Lower leg skin (tissue), 4 donors: ENCODE measurements at regions of chr12 and their contacts with region 1.

Region 1: GRCh38 chr12:64890873-64891468 is 66.5 kb downstream of the TBC1D30 start:
- DNase-seq: no peak
- H3K4me3 ChIP-seq: no peak overlapping the region
- CTCF ChIP-seq: no peak
- POLR2A ChIP-seq: no peak

Region 2: GRCh38 chr12:64923536-64923935 is 32.6 kb after region 1 on chr12:
- intact Hi-C with region 1: no loop called
- DNase-seq: no peak
- H3K4me3 ChIP-seq: no peak overlapping the region
- CTCF ChIP-seq: no peak
- POLR2A ChIP-seq: no peak

Region 3: DNA sequence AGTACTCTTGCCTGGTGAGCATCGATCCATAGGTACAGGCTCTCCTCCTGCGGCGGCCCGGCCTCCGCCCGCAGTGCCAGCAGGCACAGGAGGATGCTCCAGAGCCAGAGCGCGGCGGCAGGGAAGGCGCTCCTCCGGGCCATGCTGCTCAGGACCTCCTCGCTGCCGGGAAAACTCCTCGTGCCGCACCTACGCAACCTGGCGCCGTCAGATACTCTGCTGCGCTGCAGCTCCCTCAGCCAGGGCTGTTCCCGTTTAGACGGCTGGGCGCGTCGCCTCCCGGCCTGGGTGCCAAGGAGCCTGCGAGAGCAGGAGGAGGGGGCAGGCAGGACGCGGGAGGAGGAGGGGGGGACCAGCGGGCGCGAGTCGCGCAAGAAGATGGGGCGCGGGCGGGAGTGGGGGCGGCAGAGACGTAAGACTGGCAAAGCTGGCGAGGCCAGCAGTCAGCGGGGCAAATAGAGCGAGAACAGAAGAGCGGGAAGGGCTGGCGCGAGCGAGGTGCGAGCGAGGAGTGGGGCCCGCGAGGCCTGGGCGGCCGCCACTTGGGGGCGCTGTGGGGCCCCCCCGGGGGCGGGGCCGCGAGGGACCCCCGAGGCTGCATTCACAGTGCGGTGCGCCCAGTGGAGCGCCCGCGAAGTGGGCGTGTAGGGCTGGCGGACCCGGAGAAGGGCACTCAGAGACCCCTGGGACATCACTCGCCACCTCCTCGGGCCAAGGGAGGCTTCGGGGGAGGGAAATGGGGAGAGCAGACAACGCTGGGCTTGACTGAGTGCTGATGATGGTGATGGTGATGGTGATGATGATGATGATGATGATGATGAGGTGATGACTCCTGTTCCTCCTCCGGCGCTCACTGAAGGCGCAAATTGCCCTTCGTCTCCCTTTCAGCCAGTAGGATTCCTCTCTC is 230.3 kb after region 1 on chr12 and contains the start of gene WIF1:
- intact Hi-C with region 1: loop called (anchors 10 kb)
- DNase-seq: peak in 1 of 2 donors; percentile 86
- H3K4me3 ChIP-seq: peak within 1 kb of the TSS; percentile 17
- CTCF ChIP-seq: no peak
- POLR2A ChIP-seq: no peak
- total RNA-seq, gene WIF1: 1.7 to 4.2 (median 2.3) TPM

Region 4: GRCh38 chr12:66107451-66107915 is 1216.5 kb after region 1 on chr12:
- intact Hi-C with region 1: loop called (anchors 10 kb)
- DNase-seq: peak in 1 of 2 donors; percentile 78
- H3K4me3 ChIP-seq: no peak overlapping the region
- CTCF ChIP-seq: peak in 1 of 3 donors; percentile 13
- POLR2A ChIP-seq: no peak